ENCODE measurements at regions of chr6 and their contacts with region 1.

Region 1: DNA sequence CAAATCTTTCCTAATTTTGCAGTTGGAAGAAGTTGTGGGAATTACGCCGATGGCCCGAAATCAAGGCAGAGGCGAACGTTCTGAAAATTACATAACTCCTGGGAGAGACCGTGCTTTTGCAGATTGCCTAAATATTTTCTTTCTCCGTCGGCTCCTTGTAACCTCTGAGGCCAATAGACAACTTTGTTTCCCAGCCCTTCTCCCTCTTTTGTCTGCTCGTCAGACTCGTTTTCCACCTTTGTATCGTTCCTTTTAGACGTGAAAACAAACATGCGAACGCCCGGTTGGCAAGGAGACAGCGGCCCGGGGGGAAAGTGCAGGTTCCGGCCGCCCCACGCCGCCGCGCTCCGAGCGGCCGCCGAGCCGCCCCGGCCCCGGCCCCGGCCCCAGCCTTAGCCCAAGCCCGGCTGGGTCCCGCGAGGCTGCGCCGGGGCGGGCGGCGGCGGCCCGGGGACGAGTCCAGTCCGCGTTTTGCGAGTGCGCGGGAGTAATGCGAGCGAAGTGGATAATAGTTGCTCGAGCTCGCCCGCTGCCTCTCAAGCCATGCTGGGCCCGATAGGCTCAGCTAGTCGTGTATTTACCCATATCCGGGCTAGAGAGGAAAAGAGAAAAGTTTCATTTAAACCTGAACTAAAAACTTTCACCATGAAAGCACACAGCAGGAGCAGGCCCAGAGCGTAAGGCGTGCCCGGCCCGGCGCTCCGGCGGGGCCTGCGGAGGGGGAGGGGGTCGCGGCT is at the start of gene ARID1B:
- DNase-seq: peak; percentile 80
- ATAC-seq: peak; percentile 68
- H3K4me3 Mint-ChIP-seq: peak within 1 kb of the TSS; percentile 93
- H3K27ac Mint-ChIP-seq: peak within 1 kb of the TSS; percentile 97
- H3K4me1 Mint-ChIP-seq: peaks cover 53% of the 10 kb centered on the region
- H3K27me3 Mint-ChIP-seq: no peaks in the 10 kb centered on the region
- CTCF ChIP-seq: no peak
- total RNA-seq, gene ARID1B: 194 and 248 TPM in 2 replicates

Region 2: DNA sequence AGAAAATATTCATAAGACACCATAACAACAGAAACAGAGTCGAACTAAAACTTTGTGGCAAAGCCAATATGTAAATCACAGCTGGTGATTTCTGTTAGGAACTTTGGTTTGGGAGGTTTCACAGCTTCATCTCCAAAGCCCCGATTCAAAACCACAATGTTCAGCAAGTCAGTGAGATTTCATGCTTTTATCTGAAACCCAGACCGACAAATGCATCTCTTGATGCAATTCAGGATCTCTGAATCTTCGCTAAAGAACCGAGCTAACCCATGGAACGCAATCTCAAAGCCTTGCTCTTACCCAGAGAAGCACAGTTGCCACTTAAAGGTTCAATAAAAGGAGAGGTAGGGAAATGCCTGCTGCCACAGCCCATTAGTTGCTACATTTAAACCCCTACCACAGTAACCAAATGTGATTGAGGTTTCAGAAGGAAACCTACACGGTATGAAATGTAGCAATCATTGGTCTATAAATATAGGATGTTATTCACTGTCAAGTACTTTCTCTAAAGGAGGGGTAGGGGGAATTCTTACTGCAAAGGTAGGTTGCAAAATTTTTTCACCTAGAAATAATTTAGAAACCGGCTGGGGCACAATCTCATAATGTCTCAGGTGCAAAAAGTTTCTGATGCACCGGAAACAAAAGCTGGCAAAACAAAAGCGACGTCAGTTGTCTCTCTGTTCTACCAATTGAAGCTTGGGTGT is 380.8 kb before region 1 on chr6:
- CTCF ChIA-PET with region 1: no interaction called
- POLR2A ChIA-PET with region 1: interaction called, 3 read pairs
- intact Hi-C with region 1: loop called (anchors 10 kb)
- DNase-seq: no peak
- ATAC-seq: peak; percentile 62
- H3K4me3 Mint-ChIP-seq: peak overlapping the region; percentile 68
- H3K27ac Mint-ChIP-seq: peak overlapping the region; percentile 84
- H3K4me1 Mint-ChIP-seq: peaks cover 76% of the 10 kb centered on the region
- H3K27me3 Mint-ChIP-seq: no peaks in the 10 kb centered on the region
- CTCF ChIP-seq: no peak

Region 3: DNA sequence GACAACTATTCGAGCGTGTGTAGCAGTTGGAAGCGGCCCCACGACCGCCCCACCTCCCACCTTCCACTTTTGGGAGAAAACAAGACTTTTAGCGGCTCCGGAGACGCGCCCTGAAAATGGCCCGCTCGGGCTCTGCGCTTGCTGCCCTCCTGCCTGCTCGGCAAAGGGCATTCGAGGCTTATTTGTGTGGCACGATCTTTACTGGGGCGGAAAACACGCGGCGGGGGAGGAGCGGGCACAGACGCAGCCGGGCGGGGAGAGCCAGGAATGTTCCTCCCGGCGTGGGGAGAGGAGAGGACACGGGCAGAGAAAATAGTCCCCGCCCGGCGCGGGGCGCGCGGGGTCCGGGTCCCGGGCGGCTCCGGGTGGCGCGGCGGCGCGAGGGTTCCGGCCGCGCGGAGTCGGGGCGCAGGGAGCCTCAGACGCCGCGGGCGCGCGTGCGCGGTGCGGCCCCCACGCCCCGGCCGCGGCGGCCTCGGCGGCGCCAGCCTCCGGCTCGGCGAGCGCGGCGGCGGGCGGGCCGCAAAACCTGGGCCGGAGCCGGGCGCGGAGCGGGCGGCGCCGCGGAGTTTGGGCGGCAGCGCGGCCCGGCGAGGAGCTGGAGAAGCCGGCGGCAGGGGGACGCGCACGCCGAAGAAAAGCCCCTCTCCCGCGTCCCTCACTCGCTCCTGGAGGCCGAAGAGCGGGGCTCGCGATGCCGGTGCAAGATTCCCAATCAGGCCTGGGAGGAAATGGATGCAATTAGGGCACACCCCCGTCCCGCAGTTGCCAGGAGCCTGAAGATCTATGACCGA is 89.8 kb before region 1 on chr6:
- CTCF ChIA-PET with region 1: interaction called, 3 read pairs
- POLR2A ChIA-PET with region 1: interaction called, 155 read pairs
- intact Hi-C with region 1: loop called (anchors 1 kb)
- DNase-seq: peak; percentile 86
- ATAC-seq: peak; percentile 79
- H3K4me3 Mint-ChIP-seq: peak overlapping the region; percentile 94
- H3K27ac Mint-ChIP-seq: peak overlapping the region; percentile 98
- H3K4me1 Mint-ChIP-seq: peaks cover 62% of the 10 kb centered on the region
- H3K27me3 Mint-ChIP-seq: no peaks in the 10 kb centered on the region
- CTCF ChIP-seq: no peak

Region 4: GRCh38 chr6:156741287-156742073 is 35.5 kb before region 1 on chr6:
- CTCF ChIA-PET with region 1: no interaction called
- POLR2A ChIA-PET with region 1: interaction called, 5 read pairs
- intact Hi-C with region 1: loop called (anchors 1 kb)
- DNase-seq: no peak
- ATAC-seq: peak; percentile 86
- H3K4me3 Mint-ChIP-seq: peak overlapping the region; percentile 24
- H3K27ac Mint-ChIP-seq: peak overlapping the region; percentile 77
- H3K4me1 Mint-ChIP-seq: peaks cover 11% of the 10 kb centered on the region
- H3K27me3 Mint-ChIP-seq: no peaks in the 10 kb centered on the region
- CTCF ChIP-seq: no peak

Region 5: DNA sequence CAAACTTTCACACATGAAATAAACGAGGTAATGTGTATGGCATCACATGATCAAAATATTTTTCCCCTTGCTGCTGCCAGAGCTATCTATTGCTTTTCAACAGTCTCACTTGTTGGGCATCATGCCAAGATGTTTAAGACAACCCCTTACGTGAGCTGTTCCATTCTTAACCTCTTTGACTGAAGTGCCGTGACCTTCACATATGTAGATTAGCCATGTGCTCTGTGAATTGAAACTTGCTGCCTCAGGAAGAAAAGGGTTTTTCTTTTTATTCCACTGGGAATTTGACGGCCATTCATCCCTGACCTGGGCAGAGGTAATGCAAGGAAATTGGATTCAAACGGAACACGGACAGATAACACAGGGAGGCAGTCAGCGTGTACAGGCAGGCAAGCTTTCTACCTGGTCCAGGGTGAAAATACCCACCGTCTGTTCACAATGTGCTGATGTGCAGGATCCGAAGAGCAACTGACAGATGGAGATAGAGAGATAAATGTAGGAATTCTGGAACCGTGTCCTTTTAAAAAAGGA is 14.4 kb after region 1 on chr6:
- CTCF ChIA-PET with region 1: interaction called, 4 read pairs
- POLR2A ChIA-PET with region 1: interaction called, 19 read pairs
- intact Hi-C with region 1: loop called (anchors 1 kb)
- DNase-seq: no peak
- ATAC-seq: peak; percentile 74
- H3K4me3 Mint-ChIP-seq: peak overlapping the region; percentile 77
- H3K27ac Mint-ChIP-seq: peak overlapping the region; percentile 86
- H3K4me1 Mint-ChIP-seq: peaks cover 100% of the 10 kb centered on the region
- H3K27me3 Mint-ChIP-seq: no peaks in the 10 kb centered on the region
- CTCF ChIP-seq: no peak

Region 6: DNA sequence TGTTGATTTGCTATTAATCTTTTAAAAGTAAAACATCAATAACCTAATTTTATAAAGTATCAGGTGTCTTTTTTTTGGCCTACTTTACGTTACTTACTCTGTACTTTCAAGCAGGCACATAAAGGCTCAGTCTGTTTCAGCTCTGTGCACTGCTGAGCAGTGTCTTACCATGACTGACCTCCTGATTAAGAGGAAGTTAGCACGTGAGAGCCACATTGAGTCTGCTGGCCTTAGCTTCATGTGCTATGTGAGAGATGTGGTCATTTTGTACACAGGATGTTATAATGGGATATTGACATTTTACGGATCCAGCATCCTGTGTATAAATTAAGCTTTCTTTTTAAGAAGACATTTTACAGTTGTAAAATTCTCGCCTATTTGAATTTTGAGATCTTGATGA is 32.0 kb after region 1 on chr6:
- CTCF ChIA-PET with region 1: no interaction called
- POLR2A ChIA-PET with region 1: no interaction called
- intact Hi-C with region 1: no loop called
- DNase-seq: no peak
- ATAC-seq: peak; percentile 91
- H3K4me3 Mint-ChIP-seq: peak overlapping the region; percentile 44
- H3K27ac Mint-ChIP-seq: peak overlapping the region; percentile 47
- H3K4me1 Mint-ChIP-seq: peaks cover 88% of the 10 kb centered on the region
- H3K27me3 Mint-ChIP-seq: no peaks in the 10 kb centered on the region
- CTCF ChIP-seq: no peak

Region 7: GRCh38 chr6:157221007-157221816 is 444.2 kb after region 1 on chr6:
- CTCF ChIA-PET with region 1: no interaction called
- POLR2A ChIA-PET with region 1: no interaction called
- intact Hi-C with region 1: loop called (anchors 5 kb)
- DNase-seq: peak; percentile 75
- ATAC-seq: peak; percentile 61
- H3K4me3 Mint-ChIP-seq: peak overlapping the region; percentile 77
- H3K27ac Mint-ChIP-seq: peak overlapping the region; percentile 15
- H3K4me1 Mint-ChIP-seq: peaks cover 44% of the 10 kb centered on the region
- H3K27me3 Mint-ChIP-seq: no peaks in the 10 kb centered on the region
- CTCF ChIP-seq: no peak

Region 8: DNA sequence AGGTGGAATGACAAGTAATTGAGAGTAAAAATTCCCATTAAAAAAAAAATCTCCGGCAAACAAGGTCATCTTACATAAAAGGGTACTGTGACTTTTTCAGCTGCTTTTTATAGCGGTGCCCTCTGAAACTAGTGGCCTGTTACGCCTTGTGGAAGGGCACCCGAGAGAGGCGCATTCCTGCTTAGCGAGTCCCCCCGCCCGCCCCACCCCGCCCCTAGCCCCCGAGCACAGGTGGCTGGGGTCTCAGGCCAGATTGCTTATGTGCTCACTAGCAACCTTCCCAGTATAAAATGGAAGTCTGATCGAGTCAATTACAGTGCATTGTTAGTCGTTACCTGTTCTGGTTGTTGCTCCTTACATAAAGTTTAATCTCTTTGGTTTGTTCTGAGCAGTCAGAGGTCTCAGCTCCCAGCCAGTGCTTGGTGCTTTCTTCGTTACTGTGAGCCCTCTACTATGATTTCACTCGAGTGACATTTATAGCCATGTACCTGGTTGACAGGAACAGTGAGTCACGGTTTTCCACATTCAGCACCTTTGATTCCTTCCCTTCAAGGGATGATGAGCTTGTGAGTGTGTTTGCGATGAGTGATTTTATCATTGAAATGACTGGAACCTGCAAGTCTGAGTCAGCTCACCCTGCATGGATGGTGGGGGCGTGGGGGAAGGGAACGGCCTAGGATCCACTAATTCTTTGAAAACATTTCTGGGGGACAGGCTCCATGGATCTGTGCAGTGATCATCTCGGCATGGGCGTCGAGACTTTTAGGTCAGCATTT is 651.6 kb after region 1 on chr6:
- CTCF ChIA-PET with region 1: no interaction called
- POLR2A ChIA-PET with region 1: no interaction called
- intact Hi-C with region 1: no loop called
- DNase-seq: no peak
- ATAC-seq: no peak
- H3K4me3 Mint-ChIP-seq: no peak overlapping the region
- H3K27ac Mint-ChIP-seq: no peak overlapping the region
- H3K4me1 Mint-ChIP-seq: peaks cover 48% of the 10 kb centered on the region
- H3K27me3 Mint-ChIP-seq: no peaks in the 10 kb centered on the region
- CTCF ChIP-seq: no peak